ENCODE measurements at regions of chr18 and their contacts with region 1.

Region 1: GRCh38 chr18:27964811-27965210 is 212.1 kb downstream of the CDH2 start:
- DNase-seq: no peak
- ATAC-seq: no peak

Region 2: DNA sequence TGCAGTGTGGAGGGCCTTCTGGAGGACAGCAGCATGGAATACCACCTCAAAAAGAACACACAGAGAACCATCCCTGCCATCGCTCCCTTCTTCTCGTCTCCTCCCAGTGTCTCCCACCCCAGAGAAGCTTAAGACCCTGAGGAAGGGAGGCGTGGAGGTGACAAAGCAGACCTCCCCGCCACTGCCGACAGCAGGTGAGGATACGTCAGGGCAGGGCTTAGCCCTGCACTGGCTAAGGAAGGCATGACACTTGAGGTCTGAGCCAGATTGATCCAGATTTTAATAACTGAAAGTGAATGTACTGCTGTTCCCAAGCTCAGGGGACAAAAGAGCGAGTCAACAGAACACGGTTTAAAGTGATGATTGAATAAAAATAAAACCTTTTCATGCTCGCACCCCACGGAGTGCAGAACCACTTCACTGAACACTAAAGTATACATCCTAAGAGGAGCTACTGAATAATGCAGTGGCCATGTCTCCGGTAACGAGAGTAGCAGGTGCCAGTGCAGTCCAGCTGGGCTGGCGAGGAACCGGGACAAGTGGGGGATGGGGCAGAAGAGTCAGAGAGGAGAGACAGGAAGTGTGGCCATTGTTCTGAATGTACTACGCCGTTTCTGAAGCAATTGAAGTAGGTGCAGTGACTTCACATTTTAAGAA is 178.9 kb before region 1 on chr18:
- intact Hi-C with region 1: loop called (anchors 10 kb)
- DNase-seq: no peak
- ATAC-seq: no peak

Region 3: GRCh38 chr18:27860701-27861107 is 104.1 kb before region 1 on chr18:
- intact Hi-C with region 1: loop called (anchors 10 kb)
- DNase-seq: peak; percentile 60
- ATAC-seq: peak; percentile 74